Adrenal gland (tissue), 19 donors: ENCODE measurements at regions of chr14 and their contacts with region 1.

Region 1: DNA sequence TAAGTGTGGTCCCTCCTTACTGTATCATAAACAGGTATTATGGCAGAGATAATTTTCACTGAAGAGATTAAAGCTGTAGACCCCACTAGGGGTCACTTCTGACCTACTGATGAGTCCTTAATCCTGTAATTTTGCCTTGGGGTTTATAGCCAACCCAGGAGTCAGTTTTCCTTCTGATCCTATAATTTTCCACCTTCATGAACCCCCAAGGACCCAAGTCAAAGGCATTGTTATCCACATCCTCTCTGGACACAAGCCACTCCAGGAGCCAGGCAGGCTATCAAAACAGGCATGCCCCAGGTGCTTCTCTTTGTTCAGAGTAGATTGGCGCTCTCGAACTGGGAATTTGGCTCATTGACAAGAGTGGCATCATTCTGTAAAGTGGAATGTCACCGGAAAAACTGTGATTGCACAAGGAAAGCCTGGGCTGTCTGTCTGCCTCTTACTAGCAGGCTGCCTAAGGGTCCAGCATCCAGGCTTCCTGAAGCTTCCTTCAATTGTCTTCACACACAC is 1523.2 kb upstream of the FLRT2 start:
- DNase-seq: peak; percentile 26 to 76 (median 34)
- H3K4me3 ChIP-seq: no peak overlapping the region
- H3K27ac ChIP-seq: no peak overlapping the region
- H3K4me1 ChIP-seq: no peaks in the 10 kb centered on the region
- H3K27me3 ChIP-seq: no peaks in the 10 kb centered on the region
- CTCF ChIP-seq: peak in 3 of 6 experiments; percentile 10 to 14 (median 10)
- POLR2A ChIP-seq: no peak

Region 2: GRCh38 chr14:85402569-85403162 is 1396.0 kb after region 1 on chr14:
- intact Hi-C with region 1: loop called in 1 of 2 experiments (anchors 10 kb)
- DNase-seq: no peak
- H3K4me3 ChIP-seq: no peak overlapping the region
- H3K27ac ChIP-seq: no peak overlapping the region
- H3K4me1 ChIP-seq: no peaks in the 10 kb centered on the region
- H3K27me3 ChIP-seq: no peaks in the 10 kb centered on the region
- CTCF ChIP-seq: no peak
- POLR2A ChIP-seq: no peak